ENCODE measurements at regions of chr10 and their contacts with region 1.

Region 1: DNA sequence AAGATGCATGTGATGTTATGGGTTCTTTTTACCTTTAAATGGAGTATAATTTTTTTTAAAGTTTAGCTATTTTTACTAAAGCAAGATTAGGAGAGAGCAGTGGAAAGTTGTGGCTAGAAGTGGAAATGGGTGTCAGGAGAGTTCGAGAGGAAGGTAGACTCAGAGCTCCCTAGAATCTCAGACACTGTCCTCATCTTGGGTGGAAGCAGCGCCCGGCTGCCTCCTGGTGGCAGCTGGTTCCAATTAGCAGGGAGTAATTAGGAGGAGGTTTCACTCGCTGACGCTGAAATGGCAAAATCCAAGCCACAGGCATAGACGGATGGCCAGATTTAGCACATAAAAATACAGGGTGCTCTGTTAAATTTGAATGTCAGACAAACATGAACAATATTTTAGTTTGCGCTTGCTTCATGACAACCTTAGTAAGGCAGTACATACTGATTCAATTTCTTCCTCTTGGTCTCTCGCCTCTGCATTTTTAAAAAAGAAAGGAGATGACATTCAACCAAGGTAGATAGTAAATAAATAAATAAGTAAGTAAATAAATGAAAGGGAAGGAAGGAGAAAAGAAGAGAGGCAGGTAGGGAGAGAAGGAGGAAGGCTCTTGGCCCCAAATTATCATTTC is 58.5 kb downstream of the LGI1 start:
- DNase-seq: no peak
- H3K4me3 ChIP-seq: no peak overlapping the region
- CTCF ChIP-seq: peak; percentile 78

Region 2: GRCh38 chr10:93435621-93436397 is 380.4 kb before region 1 on chr10:
- CTCF ChIA-PET with region 1: no interaction called
- POLR2A ChIA-PET with region 1: no interaction called
- DNase-seq: no peak
- H3K4me3 ChIP-seq: no peak overlapping the region; the same call in 1 of the 2 replicates
- CTCF ChIP-seq: no peak

Region 3: GRCh38 chr10:93615576-93616235 is 200.5 kb before region 1 on chr10:
- CTCF ChIA-PET with region 1: no interaction called
- POLR2A ChIA-PET with region 1: no interaction called
- DNase-seq: no peak
- H3K4me3 ChIP-seq: no peak overlapping the region
- CTCF ChIP-seq: no peak

Region 4: GRCh38 chr10:93697207-93697606 is 119.0 kb before region 1 on chr10:
- CTCF ChIA-PET with region 1: interaction called, 81 read pairs
- POLR2A ChIA-PET with region 1: interaction called, 3 read pairs
- DNase-seq: no peak
- H3K4me3 ChIP-seq: no peak overlapping the region
- CTCF ChIP-seq: no peak

Region 5: DNA sequence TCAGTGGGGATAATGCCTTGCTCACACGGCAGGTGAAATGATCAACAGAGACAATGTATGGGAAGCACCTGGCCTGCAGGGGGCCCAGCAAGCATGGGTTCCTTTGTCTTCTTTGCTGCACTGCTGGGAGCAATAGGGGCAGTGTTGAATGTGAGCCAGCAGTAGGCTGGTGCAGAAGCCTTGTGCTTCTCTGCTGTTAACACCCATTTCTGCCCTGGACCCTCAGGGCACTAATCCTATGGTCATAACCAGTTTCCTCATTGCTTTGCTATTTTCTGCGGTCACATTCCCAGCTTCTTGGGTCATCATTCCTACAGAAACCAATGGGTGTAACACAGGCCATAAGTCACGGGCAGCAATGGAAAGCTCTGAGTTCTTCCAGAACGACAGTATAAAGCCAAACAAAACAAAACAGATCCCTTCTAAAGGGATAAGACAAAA is 69.4 kb before region 1 on chr10:
- CTCF ChIA-PET with region 1: interaction called, 54 read pairs
- POLR2A ChIA-PET with region 1: no interaction called
- DNase-seq: peak; percentile 81
- H3K4me3 ChIP-seq: no peak overlapping the region
- CTCF ChIP-seq: peak; percentile 2

Region 6: GRCh38 chr10:93826355-93826754 is 10.1 kb after region 1 on chr10:
- CTCF ChIA-PET with region 1: interaction called, 14 read pairs
- POLR2A ChIA-PET with region 1: no interaction called
- DNase-seq: no peak
- H3K4me3 ChIP-seq: no peak overlapping the region
- CTCF ChIP-seq: no peak